Head of caudate nucleus (tissue), 42 donors: ENCODE measurements at regions of chr12 and their contacts with region 1.

Region 1: GRCh38 chr12:12266873-12267741 is at the start of gene LRP6:
- DNase-seq: peak; percentile 66 to 97 (median 93)

Region 2: GRCh38 chr12:12010277-12011039 is 256.6 kb before region 1 on chr12:
- intact Hi-C with region 1: no loop called
- DNase-seq: peak in 41 of 42 donors; percentile 15 to 82 (median 54)

Region 3: GRCh38 chr12:12349711-12350665 is 82.9 kb after region 1 on chr12 and contains the start of gene MANSC1:
- intact Hi-C with region 1: loop called (anchors 10 kb)
- DNase-seq: peak; percentile 46 to 93 (median 81)